Caco-2 (cell line): ENCODE measurements at regions of chr9 and their contacts with region 1.

Region 1: GRCh38 chr9:133499132-133499891 is 20.4 kb upstream of the SLC2A6 start:
- DNase-seq: peak; percentile 57 to 64
- H3K4me3 ChIP-seq: no peak overlapping the region
- H3K4me3 Mint-ChIP-seq: no peak overlapping the region
- H3K27ac Mint-ChIP-seq: peak overlapping the region; percentile 37
- H3K4me1 ChIP-seq: peaks cover 16% of the 10 kb centered on the region
- H3K4me1 Mint-ChIP-seq: no peaks in the 10 kb centered on the region
- H3K27me3 ChIP-seq: no peaks in the 10 kb centered on the region
- H3K27me3 Mint-ChIP-seq: no peaks in the 10 kb centered on the region
- CTCF ChIP-seq: no peak

Region 2: GRCh38 chr9:133478851-133479711 is 20.2 kb before region 1 on chr9 and contains the start of gene SLC2A6:
- CTCF ChIA-PET with region 1: no interaction called
- POLR2A ChIA-PET with region 1: no interaction called
- intact Hi-C with region 1: loop called (anchors 1 kb)
- DNase-seq: peak; percentile 83 to 90
- H3K4me3 ChIP-seq: peak within 1 kb of the TSS; percentile 43
- H3K4me3 Mint-ChIP-seq: peak within 1 kb of the TSS; percentile 66
- H3K27ac Mint-ChIP-seq: no peak within 1 kb of the TSS
- H3K4me1 ChIP-seq: 0 out of 2 replicates have a peak, but pooled peaks cover 7% of the 10 kb centered on the region
- H3K4me1 Mint-ChIP-seq: peaks cover 7% of the 10 kb centered on the region
- H3K27me3 ChIP-seq: no peaks in the 10 kb centered on the region
- H3K27me3 Mint-ChIP-seq: peaks cover 3% of the 10 kb centered on the region
- CTCF ChIP-seq: no peak
- total RNA-seq, gene SLC2A6: 7.1 and 8.4 TPM in 2 replicates

Region 3: GRCh38 chr9:133485361-133486260 is 13.7 kb before region 1 on chr9:
- CTCF ChIA-PET with region 1: interaction called, 11 read pairs
- POLR2A ChIA-PET with region 1: no interaction called
- intact Hi-C with region 1: no loop called
- DNase-seq: no peak
- H3K4me3 ChIP-seq: no peak overlapping the region
- H3K4me3 Mint-ChIP-seq: no peak overlapping the region
- H3K27ac Mint-ChIP-seq: no peak overlapping the region
- H3K4me1 ChIP-seq: peaks cover 11% of the 10 kb centered on the region; the same call in 1 of the 2 replicates
- H3K4me1 Mint-ChIP-seq: peaks cover 7% of the 10 kb centered on the region
- H3K27me3 ChIP-seq: no peaks in the 10 kb centered on the region
- H3K27me3 Mint-ChIP-seq: peaks cover 3% of the 10 kb centered on the region
- CTCF ChIP-seq: no peak